Psoas muscle (tissue), 8 donors: ENCODE measurements at regions of chr13 and their contacts with region 1.

Region 1: GRCh38 chr13:112443995-112444860 is 68.1 kb downstream of the SPACA7 start:
- DNase-seq: peak; percentile 43 to 63
- ATAC-seq: peak; percentile 45 to 72 (median 56)
- H3K4me3 ChIP-seq: no peak overlapping the region
- H3K27ac ChIP-seq: no peak overlapping the region
- H3K4me1 ChIP-seq: no peaks in the 10 kb centered on the region
- H3K27me3 ChIP-seq: peaks cover 0 to 42% (median 28%) of the 10 kb centered on the region in 3 donors
- CTCF ChIP-seq: peak; percentile 70

Region 2: GRCh38 chr13:111474136-111475002 is 969.9 kb before region 1 on chr13:
- intact Hi-C with region 1: loop called (anchors 2 to 5 kb)
- DNase-seq: no peak
- ATAC-seq: peak; percentile 43 to 63 (median 54)
- H3K4me3 ChIP-seq: no peak overlapping the region
- H3K27ac ChIP-seq: no peak overlapping the region
- H3K4me1 ChIP-seq: no peaks in the 10 kb centered on the region
- H3K27me3 ChIP-seq: peaks cover 0 to 18% (median 2%) of the 10 kb centered on the region in 3 donors
- CTCF ChIP-seq: peak; percentile 55

Region 3: GRCh38 chr13:112249644-112250610 is 194.3 kb before region 1 on chr13:
- intact Hi-C with region 1: loop called in 1 of 2 experiments (anchors 5 kb)
- DNase-seq: no peak
- ATAC-seq: no peak
- H3K4me3 ChIP-seq: no peak overlapping the region
- H3K27ac ChIP-seq: no peak overlapping the region
- H3K4me1 ChIP-seq: no peaks in the 10 kb centered on the region
- H3K27me3 ChIP-seq: peaks cover 0 to 6% (median 4%) of the 10 kb centered on the region in 3 donors
- CTCF ChIP-seq: no peak